ENCODE measurements at regions of chr1 and their contacts with region 1.

Region 1: DNA sequence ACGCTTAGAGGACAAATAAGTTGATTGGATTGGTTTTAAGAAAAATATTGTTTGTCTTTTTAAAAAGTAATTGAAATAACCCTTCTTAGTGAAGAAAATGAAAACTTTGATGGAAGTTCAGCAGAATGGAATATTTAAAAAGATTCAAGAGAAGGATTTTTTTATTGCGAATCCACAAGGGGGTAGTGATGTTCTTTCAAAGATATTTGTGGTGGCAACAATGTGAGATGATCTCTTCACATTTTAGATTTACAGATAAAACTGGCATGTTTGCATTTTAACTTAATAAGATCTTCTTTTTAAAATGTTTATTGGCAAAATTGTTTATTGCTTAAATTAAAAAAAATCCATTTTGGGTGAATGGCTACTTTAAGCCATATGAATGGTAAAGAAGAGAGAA is 8.9 kb downstream of the CAMTA1 start:
- DNase-seq: no peak
- ATAC-seq: no peak
- H3K4me3 ChIP-seq: no peak overlapping the region
- H3K27ac ChIP-seq: no peak overlapping the region
- H3K4me1 ChIP-seq: peaks cover 1 to 17% of the 10 kb centered on the region in 2 donors
- H3K27me3 ChIP-seq: no peaks in the 10 kb centered on the region

Region 2: DNA sequence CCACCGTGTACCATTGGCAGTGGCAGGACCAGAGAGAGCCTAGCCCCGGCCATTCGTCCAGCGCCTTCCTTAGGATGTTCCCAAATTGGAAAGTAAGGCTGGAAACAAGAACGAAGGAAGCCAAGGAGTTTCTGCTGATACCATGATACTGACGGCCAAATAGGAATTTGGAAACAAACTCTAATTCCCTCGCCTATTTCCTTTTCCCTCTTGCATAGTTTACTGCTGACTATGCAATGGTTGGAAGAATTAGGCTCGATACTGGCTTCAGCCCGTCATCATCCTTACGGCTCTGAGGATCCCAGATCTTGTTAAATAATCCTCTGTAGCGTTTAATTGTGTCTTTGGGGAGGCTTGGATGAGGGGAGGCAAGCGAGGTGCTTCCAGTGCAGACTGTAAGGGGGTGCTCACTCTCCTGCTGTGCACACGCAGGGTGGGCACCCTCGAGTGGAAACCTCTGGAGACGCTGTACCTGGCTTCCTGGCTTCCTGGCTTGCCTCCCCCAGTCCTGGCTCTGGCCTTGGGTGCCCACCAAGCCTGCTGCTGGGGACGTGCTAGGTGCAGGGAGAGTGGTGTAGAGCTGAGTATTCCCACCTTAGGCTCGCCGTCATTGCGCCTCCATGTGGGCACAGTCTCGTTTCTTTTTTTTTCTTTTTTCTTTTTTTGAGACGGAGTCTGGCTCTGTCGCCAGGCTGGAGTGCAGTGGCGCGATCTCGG is 36.3 kb before region 1 on chr1:
- intact Hi-C with region 1: no loop called
- DNase-seq: no peak
- ATAC-seq: peak; percentile 19
- H3K4me3 ChIP-seq: no peak overlapping the region
- H3K27ac ChIP-seq: no peak overlapping the region
- H3K4me1 ChIP-seq: no peaks in the 10 kb centered on the region
- H3K27me3 ChIP-seq: no peaks in the 10 kb centered on the region

Region 3: GRCh38 chr1:6868660-6869380 is 74.7 kb after region 1 on chr1:
- intact Hi-C with region 1: loop called in 1 of 2 experiments (anchors 5 kb)
- DNase-seq: no peak
- ATAC-seq: no peak
- H3K4me3 ChIP-seq: no peak overlapping the region
- H3K27ac ChIP-seq: peak overlapping the region in 1 of 2 donors; percentile 16
- H3K4me1 ChIP-seq: peaks cover 5 to 11% of the 10 kb centered on the region in 2 donors
- H3K27me3 ChIP-seq: no peaks in the 10 kb centered on the region

Region 4: DNA sequence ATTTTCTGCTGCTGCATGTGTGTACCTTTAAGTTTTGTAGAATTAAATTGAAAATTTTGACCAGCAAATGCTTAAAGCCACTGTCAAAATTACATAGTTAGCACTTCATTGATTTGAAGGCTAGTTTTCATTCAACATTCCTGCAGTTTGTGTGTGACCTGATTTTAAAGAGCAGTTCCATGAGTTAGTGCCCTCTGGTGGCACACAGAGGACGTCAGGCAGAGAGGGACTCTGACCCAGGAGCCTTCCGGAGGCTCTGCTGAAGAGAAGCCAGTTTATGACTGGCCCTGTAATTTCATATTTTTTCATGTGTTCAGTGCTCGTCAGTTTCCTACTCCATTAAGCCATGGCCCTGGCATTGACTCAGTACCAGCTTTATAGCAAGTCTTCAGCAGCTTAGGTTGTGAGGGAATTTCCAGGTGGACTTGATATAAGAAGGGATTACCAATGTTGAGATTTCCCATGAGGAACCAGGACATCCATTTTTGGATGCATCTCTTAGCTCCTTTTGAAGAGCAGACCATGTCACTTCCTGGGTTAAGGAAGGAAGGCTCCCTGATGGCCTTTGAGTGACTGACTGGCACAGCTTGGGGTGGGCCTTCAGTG is 95.8 kb after region 1 on chr1:
- intact Hi-C with region 1: loop called in 1 of 2 experiments (anchors 2 kb)
- DNase-seq: peak; percentile 73 to 79
- ATAC-seq: peak; percentile 71
- H3K4me3 ChIP-seq: no peak overlapping the region
- H3K27ac ChIP-seq: no peak overlapping the region
- H3K4me1 ChIP-seq: no peaks in the 10 kb centered on the region
- H3K27me3 ChIP-seq: no peaks in the 10 kb centered on the region

Region 5: DNA sequence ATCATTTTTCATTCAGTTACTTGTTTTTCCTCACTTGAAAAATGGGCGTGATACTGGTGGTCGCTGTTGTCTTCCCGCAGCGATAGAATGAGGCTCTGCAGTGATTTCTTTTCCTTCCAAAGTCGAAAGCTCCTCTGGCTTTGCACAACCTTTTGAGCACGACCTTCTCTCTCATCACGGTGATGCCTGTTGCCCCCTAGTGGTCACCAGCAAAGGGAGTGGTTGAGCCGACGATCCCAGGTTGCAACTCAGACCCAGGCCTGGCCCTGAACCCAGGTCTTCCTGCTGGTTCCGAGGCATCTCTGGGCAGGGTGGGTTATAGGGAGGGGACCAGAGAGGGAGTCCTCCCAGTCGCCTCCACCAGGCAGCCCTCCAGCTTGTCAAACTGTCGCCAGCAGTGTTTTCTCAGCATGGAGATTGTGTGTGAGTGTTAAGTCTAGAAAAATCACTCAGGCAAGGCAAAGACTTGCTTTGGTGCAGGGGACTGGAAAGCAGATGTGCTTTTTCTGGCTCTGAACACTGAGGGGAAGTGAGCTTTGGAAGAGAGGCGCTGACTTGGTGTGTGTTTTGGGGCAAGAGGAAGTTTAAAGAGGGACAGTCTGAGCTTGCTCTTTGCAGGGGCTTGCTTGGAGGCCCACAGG is 276.3 kb after region 1 on chr1:
- intact Hi-C with region 1: loop called (anchors 2 to 10 kb)
- DNase-seq: peak in 1 of 2 donors; percentile 68
- ATAC-seq: peak; percentile 84
- H3K4me3 ChIP-seq: peak overlapping the region; percentile 6 to 51
- H3K27ac ChIP-seq: no peak overlapping the region
- H3K4me1 ChIP-seq: no peaks in the 10 kb centered on the region
- H3K27me3 ChIP-seq: no peaks in the 10 kb centered on the region

Region 6: GRCh38 chr1:7218210-7218832 is 424.2 kb after region 1 on chr1:
- intact Hi-C with region 1: loop called in 1 of 2 experiments (anchors 10 kb)
- DNase-seq: no peak
- ATAC-seq: no peak
- H3K4me3 ChIP-seq: no peak overlapping the region
- H3K27ac ChIP-seq: no peak overlapping the region
- H3K4me1 ChIP-seq: no peaks in the 10 kb centered on the region
- H3K27me3 ChIP-seq: no peaks in the 10 kb centered on the region

Region 7: DNA sequence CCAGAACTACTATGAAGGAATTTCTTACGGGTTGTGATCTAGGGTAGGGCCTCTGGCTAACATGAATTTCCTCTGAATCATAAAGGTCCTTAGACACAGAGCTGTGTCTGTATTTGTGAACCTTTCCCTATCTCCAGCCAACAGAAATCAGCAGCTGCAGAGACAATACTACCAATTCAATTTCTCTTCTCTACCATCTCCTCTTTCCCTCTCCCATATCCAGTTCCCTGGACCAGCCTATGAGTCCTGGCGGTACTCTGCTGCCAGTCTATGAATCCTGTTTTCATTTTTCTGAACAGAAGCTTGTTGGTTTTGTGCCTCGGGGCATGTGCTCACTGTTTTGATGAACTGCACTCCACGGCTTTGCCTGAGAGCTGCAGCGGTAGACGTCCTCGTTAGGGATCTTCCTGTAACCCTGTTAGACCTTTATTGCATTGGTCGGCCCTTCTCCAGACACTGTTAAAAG is 519.0 kb after region 1 on chr1:
- intact Hi-C with region 1: no loop called
- DNase-seq: no peak
- ATAC-seq: no peak
- H3K4me3 ChIP-seq: no peak overlapping the region
- H3K27ac ChIP-seq: no peak overlapping the region
- H3K4me1 ChIP-seq: no peaks in the 10 kb centered on the region
- H3K27me3 ChIP-seq: peaks cover 0 to 2% of the 10 kb centered on the region in 2 donors

Region 8: DNA sequence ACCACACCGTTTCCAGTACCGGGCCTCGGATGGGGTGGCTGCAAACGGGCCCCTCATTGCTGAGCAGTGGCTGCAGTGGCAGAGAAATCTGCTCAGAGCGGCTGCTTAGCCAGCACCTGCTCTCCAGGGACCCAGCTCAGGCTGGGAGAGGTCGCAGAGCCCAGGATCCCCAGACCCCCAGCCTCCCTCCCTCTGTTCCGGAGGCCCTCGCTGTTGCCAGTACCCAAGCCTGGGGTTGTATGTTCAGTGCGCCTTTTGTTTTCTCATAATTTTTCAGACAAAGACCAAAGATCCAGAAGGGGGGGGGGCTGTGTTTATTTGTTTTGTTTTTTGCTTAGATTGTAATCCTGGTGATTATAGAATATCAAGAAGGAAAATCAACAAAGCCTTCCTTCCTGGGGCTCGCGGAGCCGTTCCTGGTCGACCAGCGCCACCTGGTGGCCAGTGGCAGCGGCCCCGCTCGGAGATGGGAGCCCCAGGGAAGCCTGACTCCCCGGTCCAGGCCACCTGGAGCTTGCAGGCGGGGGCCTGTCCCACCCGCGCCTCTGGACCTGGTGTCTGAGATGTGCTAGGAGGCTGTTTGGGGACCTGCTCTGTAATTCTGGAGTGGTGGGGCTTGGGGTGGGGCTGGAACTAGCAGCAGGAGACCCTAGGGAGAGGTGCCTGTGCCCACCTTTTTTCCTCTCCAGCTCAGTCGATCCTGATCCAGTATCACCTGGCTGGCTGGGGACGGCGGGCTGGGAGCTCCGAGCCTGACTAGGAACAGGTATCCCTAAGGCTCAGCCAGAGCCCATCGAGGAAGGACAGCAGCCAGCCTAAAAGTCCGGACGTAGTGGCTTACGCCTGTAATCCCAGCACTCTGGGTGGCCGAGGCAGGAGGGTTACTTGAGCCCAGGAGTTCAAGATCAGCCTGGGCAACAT is 853.1 kb after region 1 on chr1:
- intact Hi-C with region 1: loop called (anchors 10 kb)
- DNase-seq: peak; percentile 74 to 93
- ATAC-seq: no peak
- H3K4me3 ChIP-seq: no peak overlapping the region
- H3K27ac ChIP-seq: no peak overlapping the region
- H3K4me1 ChIP-seq: no peaks in the 10 kb centered on the region
- H3K27me3 ChIP-seq: no peaks in the 10 kb centered on the region